ENCODE measurements at regions of chr17 and their contacts with region 1.

Region 1: GRCh38 chr17:74566132-74566753 is 1.1 kb downstream of the CD300H start:
- DNase-seq: peak; percentile 51 to 66
- ATAC-seq: peak in 1 of 2 experiments; percentile 67; a peak in 3 of 6 replicates
- H3K4me3 ChIP-seq: no peak overlapping the region
- H3K27ac ChIP-seq: peak overlapping the region in 1 of 2 experiments; percentile 41; a peak in 1 of 6 replicates
- H3K4me1 ChIP-seq: peaks cover 27% of the 10 kb centered on the region
- CTCF ChIP-seq: peak; percentile 68
- EP300 ChIP-seq: no peak
- POLR2A ChIP-seq: no peak
- RAD21 ChIP-seq: peak; percentile 64 to 75

Region 2: GRCh38 chr17:74528491-74529199 is 37.6 kb before region 1 on chr17:
- CTCF ChIA-PET with region 1: interaction called, 13 read pairs
- POLR2A ChIA-PET with region 1: no interaction called
- DNase-seq: no peak
- ATAC-seq: no peak
- H3K4me3 ChIP-seq: no peak overlapping the region
- H3K27ac ChIP-seq: no peak overlapping the region
- H3K4me1 ChIP-seq: no peaks in the 10 kb centered on the region
- CTCF ChIP-seq: no peak
- EP300 ChIP-seq: no peak
- POLR2A ChIP-seq: no peak
- RAD21 ChIP-seq: no peak

Region 3: GRCh38 chr17:74579900-74580299 is 13.7 kb after region 1 on chr17:
- CTCF ChIA-PET with region 1: interaction called, 53 read pairs
- POLR2A ChIA-PET with region 1: interaction called, 3 read pairs
- DNase-seq: no peak
- ATAC-seq: no peak
- H3K4me3 ChIP-seq: no peak overlapping the region
- H3K27ac ChIP-seq: no peak overlapping the region
- H3K4me1 ChIP-seq: no peaks in the 10 kb centered on the region
- CTCF ChIP-seq: no peak
- EP300 ChIP-seq: no peak
- POLR2A ChIP-seq: no peak
- RAD21 ChIP-seq: no peak

Region 4: DNA sequence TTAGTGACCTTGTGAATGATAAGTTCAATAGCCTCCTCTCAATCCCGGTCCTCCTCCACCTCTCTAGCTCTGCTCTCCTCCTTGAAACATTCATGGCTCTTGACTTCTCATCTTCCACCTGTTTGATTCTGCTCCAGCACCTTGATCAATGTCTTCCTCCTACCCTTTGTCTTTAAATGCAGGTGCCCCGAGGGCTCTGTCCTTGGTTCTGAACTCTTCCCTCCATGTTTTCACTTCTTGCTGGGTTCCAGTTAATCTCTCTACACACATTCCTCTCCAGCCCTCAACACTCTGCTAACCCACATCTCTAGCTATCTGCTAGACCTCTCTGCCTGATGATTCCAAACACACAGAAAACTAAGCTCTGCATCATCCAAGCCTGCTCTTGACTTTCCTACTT is 43.9 kb after region 1 on chr17:
- CTCF ChIA-PET with region 1: interaction called, 142 read pairs
- POLR2A ChIA-PET with region 1: no interaction called
- DNase-seq: no peak
- ATAC-seq: no peak
- H3K4me3 ChIP-seq: no peak overlapping the region
- H3K27ac ChIP-seq: no peak overlapping the region
- H3K4me1 ChIP-seq: peaks cover 9% of the 10 kb centered on the region
- CTCF ChIP-seq: no peak
- EP300 ChIP-seq: no peak
- POLR2A ChIP-seq: no peak
- RAD21 ChIP-seq: no peak

Region 5: GRCh38 chr17:74699236-74699635 is 133.0 kb after region 1 on chr17:
- CTCF ChIA-PET with region 1: no interaction called
- POLR2A ChIA-PET with region 1: no interaction called
- DNase-seq: no peak
- ATAC-seq: no peak
- H3K4me3 ChIP-seq: no peak overlapping the region
- H3K27ac ChIP-seq: no peak overlapping the region
- H3K4me1 ChIP-seq: no peaks in the 10 kb centered on the region
- CTCF ChIP-seq: no peak
- EP300 ChIP-seq: no peak
- POLR2A ChIP-seq: no peak
- RAD21 ChIP-seq: no peak

Region 6: DNA sequence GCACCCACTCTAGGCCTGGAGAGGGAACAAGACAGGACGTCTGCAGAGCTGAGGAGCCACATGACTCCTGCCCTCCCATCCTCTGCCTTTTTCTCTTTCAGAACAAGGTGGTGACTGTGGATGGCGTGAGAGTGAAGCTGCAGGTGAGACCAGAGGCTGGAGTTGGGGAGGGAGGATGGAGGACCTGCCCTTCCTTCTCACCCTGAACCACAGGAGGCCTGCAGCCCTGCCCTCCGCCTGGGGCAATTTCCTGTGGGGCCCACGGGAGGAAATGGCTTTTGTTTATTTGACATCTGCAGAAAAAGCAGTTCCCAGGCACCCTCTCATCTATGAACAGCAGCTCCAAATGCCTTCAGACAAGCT is 175.9 kb after region 1 on chr17:
- CTCF ChIA-PET with region 1: interaction called, 46 read pairs
- POLR2A ChIA-PET with region 1: no interaction called
- DNase-seq: no peak
- ATAC-seq: no peak
- H3K4me3 ChIP-seq: no peak overlapping the region
- H3K27ac ChIP-seq: peak overlapping the region in 1 of 2 experiments; percentile 12; a peak in 1 of 6 replicates
- H3K4me1 ChIP-seq: peaks cover 29% of the 10 kb centered on the region
- CTCF ChIP-seq: no peak
- EP300 ChIP-seq: no peak
- POLR2A ChIP-seq: no peak
- RAD21 ChIP-seq: no peak

Measured in A549 (cell line).